Naive thymus-derived CD4-positive, alpha-beta T cell (primary cell): ENCODE measurements at regions of chr6 and their contacts with region 1.

Region 1: GRCh38 chr6:10510592-10511367 is 10.4 kb upstream of the GCNT2 start:
- DNase-seq: peak in 8 of 9 donors; percentile 9 to 53 (median 39)
- ATAC-seq: peak; percentile 94
- H3K4me3 ChIP-seq: no peak overlapping the region
- H3K4me3 Mint-ChIP-seq: peak overlapping the region in 5 of 10 donors; percentile 8 to 40 (median 12)
- H3K27ac ChIP-seq: no peak overlapping the region
- H3K27ac Mint-ChIP-seq: peak overlapping the region in 1 of 9 donors; percentile 28
- H3K4me1 ChIP-seq: no peaks in the 10 kb centered on the region
- H3K4me1 Mint-ChIP-seq: peaks cover 0 to 7% (median 5%) of the 10 kb centered on the region in 7 donors
- H3K27me3 ChIP-seq: no peaks in the 10 kb centered on the region
- H3K27me3 Mint-ChIP-seq: peaks cover 0 to 11% (median 7%) of the 10 kb centered on the region in 5 donors

Region 2: DNA sequence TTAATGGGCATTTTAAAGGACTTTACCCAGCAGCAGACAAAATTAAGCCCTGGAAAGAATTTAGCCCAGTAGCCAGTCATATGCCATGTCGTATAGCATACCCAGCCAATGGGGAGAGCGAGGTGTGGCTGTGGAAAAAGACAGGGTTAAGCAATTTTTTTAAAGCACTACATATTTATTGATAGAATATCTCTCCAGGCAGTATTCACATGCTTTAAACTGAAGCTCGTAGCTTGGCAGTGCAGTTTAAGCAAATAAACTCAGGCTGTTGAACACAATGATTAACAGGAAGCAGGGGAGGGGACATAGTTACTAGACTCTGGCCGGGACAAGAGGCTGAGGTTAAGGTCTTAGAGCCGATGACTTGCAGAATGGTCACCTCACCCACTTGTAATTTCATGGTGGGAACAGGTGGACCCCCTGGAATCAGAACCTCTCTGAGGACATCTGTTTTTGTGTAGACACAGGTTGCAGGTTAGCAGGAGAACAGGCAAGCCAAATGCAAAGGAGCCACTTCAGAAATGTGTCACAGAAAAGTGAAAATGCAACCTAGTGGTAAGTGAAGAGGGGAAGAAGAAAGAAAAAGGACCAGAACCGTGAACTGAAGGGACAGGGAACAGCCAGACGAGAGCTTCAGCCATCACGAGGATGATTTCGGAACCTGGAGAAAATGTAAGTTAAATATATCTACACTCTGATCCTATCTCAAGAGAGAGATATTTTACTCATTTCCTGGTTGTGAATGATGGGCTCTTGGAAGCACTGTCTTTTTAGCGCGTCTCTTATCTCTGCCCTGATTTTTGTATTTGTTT is 17.6 kb after region 1 on chr6:
- CTCF ChIA-PET with region 1: interaction called, 3 read pairs
- POLR2A ChIA-PET with region 1: no interaction called
- intact Hi-C with region 1: loop called in 1 of 2 experiments (anchors 1 kb)
- DNase-seq: peak in 6 of 9 donors; percentile 13 to 36 (median 27)
- ATAC-seq: peak; percentile 70
- H3K4me3 ChIP-seq: peak overlapping the region; percentile 70
- H3K4me3 Mint-ChIP-seq: peak overlapping the region; percentile 87 to 98 (median 94)
- H3K27ac ChIP-seq: peak overlapping the region; percentile 69
- H3K27ac Mint-ChIP-seq: peak overlapping the region; percentile 74 to 95 (median 90)
- H3K4me1 ChIP-seq: peaks cover 10 to 15% of the 10 kb centered on the region in 2 donors
- H3K4me1 Mint-ChIP-seq: peaks cover 32 to 52% (median 44%) of the 10 kb centered on the region in 7 donors
- H3K27me3 ChIP-seq: no peaks in the 10 kb centered on the region
- H3K27me3 Mint-ChIP-seq: peaks cover 0 to 5% (median 0%) of the 10 kb centered on the region in 5 donors

Region 3: GRCh38 chr6:10659699-10660348 is 149.0 kb after region 1 on chr6:
- CTCF ChIA-PET with region 1: no interaction called
- POLR2A ChIA-PET with region 1: no interaction called
- intact Hi-C with region 1: no loop called
- DNase-seq: peak in 1 of 9 donors; percentile 6
- ATAC-seq: peak; percentile 34
- H3K4me3 ChIP-seq: no peak overlapping the region
- H3K4me3 Mint-ChIP-seq: peak overlapping the region in 6 of 10 donors; percentile 22 to 72 (median 62)
- H3K27ac ChIP-seq: no peak overlapping the region
- H3K27ac Mint-ChIP-seq: no peak overlapping the region
- H3K4me1 ChIP-seq: peaks cover 5 to 8% of the 10 kb centered on the region in 2 donors
- H3K4me1 Mint-ChIP-seq: peaks cover 0 to 20% (median 11%) of the 10 kb centered on the region in 7 donors
- H3K27me3 ChIP-seq: no peaks in the 10 kb centered on the region
- H3K27me3 Mint-ChIP-seq: peaks cover 5 to 24% (median 14%) of the 10 kb centered on the region in 5 donors

Region 4: DNA sequence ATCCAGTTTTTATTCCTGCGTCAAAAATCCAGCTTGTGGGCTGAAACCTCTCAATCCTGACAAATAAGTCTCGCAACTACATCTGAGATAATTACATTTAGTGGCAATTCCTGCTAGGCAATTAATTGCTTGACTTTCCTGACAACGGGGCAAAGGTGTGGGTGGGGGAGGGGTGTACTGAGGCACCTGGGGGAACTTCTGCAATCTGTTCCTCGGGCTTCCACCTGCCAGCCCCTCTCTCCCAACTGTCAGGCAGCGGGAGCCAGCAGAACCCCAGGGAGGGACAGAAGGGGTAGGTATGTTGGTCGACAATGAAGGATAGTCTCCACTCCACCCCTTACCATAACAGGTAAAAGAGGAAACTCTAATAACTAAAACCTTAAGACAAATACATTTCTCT is 176.8 kb after region 1 on chr6:
- CTCF ChIA-PET with region 1: no interaction called
- POLR2A ChIA-PET with region 1: no interaction called
- intact Hi-C with region 1: no loop called
- DNase-seq: no peak
- ATAC-seq: no peak
- H3K4me3 ChIP-seq: no peak overlapping the region
- H3K4me3 Mint-ChIP-seq: no peak overlapping the region
- H3K27ac ChIP-seq: no peak overlapping the region
- H3K27ac Mint-ChIP-seq: no peak overlapping the region
- H3K4me1 ChIP-seq: no peaks in the 10 kb centered on the region
- H3K4me1 Mint-ChIP-seq: peaks cover 0 to 33% (median 5%) of the 10 kb centered on the region in 7 donors
- H3K27me3 ChIP-seq: no peaks in the 10 kb centered on the region
- H3K27me3 Mint-ChIP-seq: peaks cover 4 to 13% (median 6%) of the 10 kb centered on the region in 5 donors

Region 5: DNA sequence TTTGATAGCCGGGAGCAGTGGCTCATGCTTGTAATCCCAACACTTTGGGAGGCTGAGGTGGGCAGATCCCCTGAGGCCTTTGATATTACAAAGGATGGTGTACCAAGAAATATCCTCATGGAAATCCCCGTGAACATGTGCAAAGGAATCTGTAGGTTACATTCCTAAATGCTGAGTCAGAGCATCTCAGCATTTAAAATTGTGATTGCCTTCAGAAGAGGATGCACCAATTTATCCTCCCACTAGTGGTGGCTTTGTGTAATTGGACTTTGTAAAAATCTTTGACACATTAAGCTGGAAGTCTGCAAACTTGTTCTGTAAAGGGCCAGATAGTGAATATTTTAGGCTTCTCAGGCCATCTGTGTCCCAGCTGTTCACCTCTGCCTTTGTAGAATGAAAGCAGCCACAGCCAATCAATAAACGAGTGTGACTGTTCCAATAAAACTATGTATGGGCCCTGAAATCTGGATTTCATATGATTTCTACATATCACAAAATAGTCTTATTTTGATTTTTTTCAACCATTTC is 248.6 kb after region 1 on chr6:
- CTCF ChIA-PET with region 1: no interaction called
- POLR2A ChIA-PET with region 1: no interaction called
- intact Hi-C with region 1: loop called in 1 of 2 experiments (anchors 1 kb)
- DNase-seq: peak in 4 of 9 donors; percentile 8 to 27 (median 14)
- ATAC-seq: peak; percentile 66
- H3K4me3 ChIP-seq: no peak overlapping the region
- H3K4me3 Mint-ChIP-seq: no peak overlapping the region
- H3K27ac ChIP-seq: no peak overlapping the region
- H3K27ac Mint-ChIP-seq: peak overlapping the region in 2 of 9 donors; percentile 28 to 72
- H3K4me1 ChIP-seq: no peaks in the 10 kb centered on the region
- H3K4me1 Mint-ChIP-seq: peaks cover 5 to 35% (median 24%) of the 10 kb centered on the region in 7 donors
- H3K27me3 ChIP-seq: no peaks in the 10 kb centered on the region
- H3K27me3 Mint-ChIP-seq: no peaks in the 10 kb centered on the region

Region 6: DNA sequence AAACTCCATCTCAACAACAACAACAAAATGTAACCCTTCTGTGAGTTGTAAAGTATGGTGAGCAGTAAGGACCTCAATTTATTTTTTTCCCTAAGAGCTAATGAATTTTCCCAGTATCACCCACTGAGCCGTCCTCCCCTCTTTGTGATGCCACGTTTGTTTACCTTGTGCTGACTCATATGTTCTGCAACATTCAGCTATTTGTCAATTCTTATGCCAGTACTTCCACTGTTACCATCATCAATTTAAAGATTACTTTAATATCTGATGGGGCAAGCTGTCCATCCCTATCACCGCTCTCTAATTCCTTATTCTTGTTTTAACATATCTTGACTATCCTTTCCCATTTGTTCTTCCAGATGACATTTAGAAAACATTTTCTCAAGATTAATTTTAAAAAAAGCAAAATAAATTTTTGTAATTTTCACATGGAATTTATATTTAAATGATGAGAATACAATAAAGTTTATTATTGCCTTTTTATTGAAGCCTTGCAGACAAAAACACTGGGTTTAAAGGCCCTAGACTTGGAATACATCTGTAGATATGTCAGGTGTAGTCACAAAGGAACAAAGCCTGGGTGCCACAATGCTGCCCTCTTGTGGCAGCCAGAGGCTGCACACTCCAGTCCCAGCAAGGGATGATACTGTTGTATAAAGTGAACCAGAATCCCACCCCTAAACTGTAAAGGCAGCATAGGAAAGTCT is 290.2 kb after region 1 on chr6:
- CTCF ChIA-PET with region 1: interaction called, 20 read pairs
- POLR2A ChIA-PET with region 1: no interaction called
- intact Hi-C with region 1: loop called in 1 of 2 experiments (anchors 1 kb)
- DNase-seq: peak; percentile 21 to 68 (median 56)
- ATAC-seq: peak; percentile 91
- H3K4me3 ChIP-seq: no peak overlapping the region
- H3K4me3 Mint-ChIP-seq: no peak overlapping the region
- H3K27ac ChIP-seq: no peak overlapping the region
- H3K27ac Mint-ChIP-seq: no peak overlapping the region
- H3K4me1 ChIP-seq: no peaks in the 10 kb centered on the region
- H3K4me1 Mint-ChIP-seq: peaks cover 0 to 2% (median 0%) of the 10 kb centered on the region in 7 donors
- H3K27me3 ChIP-seq: no peaks in the 10 kb centered on the region
- H3K27me3 Mint-ChIP-seq: no peaks in the 10 kb centered on the region